Heart right ventricle (tissue), 16 donors: ENCODE measurements at regions of chr5 and their contacts with region 1.

Region 1: DNA sequence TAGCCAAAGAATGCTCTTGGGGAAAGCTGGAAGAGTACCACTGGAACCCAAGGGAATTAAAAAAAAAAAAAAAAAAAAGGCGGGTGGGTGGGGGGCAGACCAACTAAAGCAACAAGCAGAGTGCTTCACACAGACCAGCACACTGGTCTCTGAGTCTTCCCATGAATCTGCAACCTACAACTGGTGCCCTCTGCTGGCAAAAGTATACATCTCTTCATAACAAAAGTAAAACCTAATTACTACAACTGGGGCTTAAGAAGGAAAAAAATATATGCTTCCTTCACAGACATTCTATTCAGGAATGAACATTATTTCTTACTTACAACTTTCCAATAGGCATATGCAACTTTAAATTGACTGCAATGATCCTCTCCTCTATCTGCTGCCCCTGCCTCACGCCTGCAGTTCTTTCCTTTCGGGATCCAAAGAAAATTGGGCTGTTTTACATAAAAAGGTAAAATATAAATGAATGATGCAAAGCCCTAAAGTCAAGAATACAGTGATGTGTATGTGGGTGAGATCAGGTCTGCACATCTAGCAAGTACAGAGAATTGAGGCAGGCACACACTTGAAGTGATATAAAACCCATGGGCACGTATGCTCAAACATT is 7.2 kb upstream of the KLHL3 start:
- DNase-seq: peak in 1 of 2 donors; percentile 78
- ATAC-seq: peak; percentile 46 to 84 (median 79)
- H3K4me3 ChIP-seq: no peak overlapping the region
- H3K27ac ChIP-seq: no peak overlapping the region
- H3K4me1 ChIP-seq: peaks cover 0 to 24% (median 9%) of the 10 kb centered on the region in 9 donors
- H3K27me3 ChIP-seq: no peaks in the 10 kb centered on the region
- CTCF ChIP-seq: peak; percentile 52 to 81 (median 68)

Region 2: GRCh38 chr5:137629646-137630045 is 113.5 kb before region 1 on chr5:
- intact Hi-C with region 1: loop called in 9 of 10 experiments (anchors 2 to 10 kb)
- DNase-seq: peak in 1 of 2 donors; percentile 40
- ATAC-seq: peak; percentile 30 to 89 (median 73)
- H3K4me3 ChIP-seq: no peak overlapping the region
- H3K27ac ChIP-seq: peak overlapping the region in 9 of 10 donors; percentile 45 to 73 (median 60)
- H3K4me1 ChIP-seq: peaks cover 4 to 35% (median 28%) of the 10 kb centered on the region in 9 donors
- H3K27me3 ChIP-seq: no peaks in the 10 kb centered on the region
- CTCF ChIP-seq: peak; percentile 76 to 95 (median 92)

Region 3: DNA sequence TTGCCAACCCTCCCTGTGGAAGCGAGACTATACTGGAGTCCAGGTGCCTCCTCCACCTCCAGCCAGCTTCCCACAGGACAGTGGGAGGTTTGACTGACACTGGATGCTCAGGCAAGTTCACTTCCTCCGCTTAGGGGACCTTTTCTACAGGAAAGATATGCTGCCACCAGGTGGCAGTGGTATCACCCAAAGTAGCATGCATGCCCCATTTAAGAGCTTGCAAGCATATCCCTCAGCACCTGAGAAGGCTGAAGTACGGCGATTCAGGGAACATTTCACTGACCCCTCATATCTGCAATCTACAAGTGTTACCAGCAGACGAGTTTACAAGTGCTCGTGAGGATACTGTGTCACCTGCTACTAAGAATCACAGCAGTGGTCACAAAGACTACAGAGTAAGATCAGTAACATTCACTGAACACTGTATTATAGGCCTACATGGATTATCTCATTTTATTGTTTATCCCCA is 82.8 kb before region 1 on chr5:
- intact Hi-C with region 1: loop called in 7 of 10 experiments (anchors 1 to 5 kb)
- DNase-seq: peak; percentile 26 to 70
- ATAC-seq: peak; percentile 78 to 94 (median 88)
- H3K4me3 ChIP-seq: no peak overlapping the region
- H3K27ac ChIP-seq: no peak overlapping the region
- H3K4me1 ChIP-seq: peaks cover 0 to 15% (median 10%) of the 10 kb centered on the region in 9 donors
- H3K27me3 ChIP-seq: no peaks in the 10 kb centered on the region
- CTCF ChIP-seq: peak; percentile 49 to 88 (median 83)

Region 4: GRCh38 chr5:137665678-137666460 is 77.3 kb before region 1 on chr5:
- intact Hi-C with region 1: loop called in 5 of 10 experiments (anchors 2 to 5 kb)
- DNase-seq: peak in 1 of 2 donors; percentile 12
- ATAC-seq: peak; percentile 85 to 97 (median 92)
- H3K4me3 ChIP-seq: no peak overlapping the region
- H3K27ac ChIP-seq: peak overlapping the region; percentile 29 to 82 (median 68)
- H3K4me1 ChIP-seq: peaks cover 0 to 28% (median 24%) of the 10 kb centered on the region in 9 donors
- H3K27me3 ChIP-seq: no peaks in the 10 kb centered on the region
- CTCF ChIP-seq: no peak

Region 5: DNA sequence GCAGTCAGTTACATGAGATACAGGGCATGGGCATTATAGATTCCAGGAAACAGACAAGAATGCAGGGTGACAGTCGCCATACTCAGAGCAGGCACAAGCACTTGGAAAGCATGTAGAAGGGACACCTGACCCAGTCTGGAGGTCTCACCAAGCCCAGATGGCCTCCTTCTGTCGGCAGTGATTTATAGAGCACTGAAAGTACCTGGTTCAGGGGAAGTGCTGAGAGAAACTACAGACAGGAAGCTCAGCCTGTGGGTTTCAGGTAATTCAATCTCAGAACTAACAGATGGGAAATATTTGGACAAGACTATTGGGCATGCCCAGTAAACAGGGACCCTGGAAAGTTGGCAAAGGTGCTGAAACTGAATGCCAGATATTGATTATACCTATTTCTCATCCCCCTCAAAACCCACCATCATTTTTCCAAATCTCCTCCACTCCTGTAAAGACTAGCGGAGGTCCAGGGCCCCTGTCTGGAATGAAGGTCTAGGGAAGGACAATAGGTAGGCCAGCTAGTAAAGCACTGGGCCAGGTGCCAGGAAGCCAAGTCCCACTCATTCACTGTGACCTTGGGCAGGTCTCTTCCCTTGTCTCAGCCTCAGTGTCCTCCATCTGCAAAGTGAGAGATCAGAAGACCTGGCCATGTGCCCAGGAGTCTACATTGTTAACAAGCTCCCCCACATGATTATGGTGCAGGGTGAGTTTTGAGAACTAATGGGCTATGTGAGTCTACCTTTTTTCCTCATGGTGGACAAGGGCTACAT is 34.2 kb before region 1 on chr5:
- intact Hi-C with region 1: no loop called
- DNase-seq: peak in 1 of 2 donors; percentile 18
- ATAC-seq: peak in 2 of 8 donors; percentile 24 to 54
- H3K4me3 ChIP-seq: no peak overlapping the region
- H3K27ac ChIP-seq: no peak overlapping the region
- H3K4me1 ChIP-seq: peaks cover 0 to 32% (median 4%) of the 10 kb centered on the region in 9 donors
- H3K27me3 ChIP-seq: no peaks in the 10 kb centered on the region
- CTCF ChIP-seq: no peak

Region 6: GRCh38 chr5:137914758-137915157 is 171.6 kb after region 1 on chr5:
- intact Hi-C with region 1: no loop called
- DNase-seq: no peak
- ATAC-seq: no peak
- H3K4me3 ChIP-seq: no peak overlapping the region
- H3K27ac ChIP-seq: no peak overlapping the region
- H3K4me1 ChIP-seq: no peaks in the 10 kb centered on the region
- H3K27me3 ChIP-seq: no peaks in the 10 kb centered on the region
- CTCF ChIP-seq: no peak